Panc1 (cell line): ENCODE measurements at regions of chr3 and their contacts with region 1.

Region 1: DNA sequence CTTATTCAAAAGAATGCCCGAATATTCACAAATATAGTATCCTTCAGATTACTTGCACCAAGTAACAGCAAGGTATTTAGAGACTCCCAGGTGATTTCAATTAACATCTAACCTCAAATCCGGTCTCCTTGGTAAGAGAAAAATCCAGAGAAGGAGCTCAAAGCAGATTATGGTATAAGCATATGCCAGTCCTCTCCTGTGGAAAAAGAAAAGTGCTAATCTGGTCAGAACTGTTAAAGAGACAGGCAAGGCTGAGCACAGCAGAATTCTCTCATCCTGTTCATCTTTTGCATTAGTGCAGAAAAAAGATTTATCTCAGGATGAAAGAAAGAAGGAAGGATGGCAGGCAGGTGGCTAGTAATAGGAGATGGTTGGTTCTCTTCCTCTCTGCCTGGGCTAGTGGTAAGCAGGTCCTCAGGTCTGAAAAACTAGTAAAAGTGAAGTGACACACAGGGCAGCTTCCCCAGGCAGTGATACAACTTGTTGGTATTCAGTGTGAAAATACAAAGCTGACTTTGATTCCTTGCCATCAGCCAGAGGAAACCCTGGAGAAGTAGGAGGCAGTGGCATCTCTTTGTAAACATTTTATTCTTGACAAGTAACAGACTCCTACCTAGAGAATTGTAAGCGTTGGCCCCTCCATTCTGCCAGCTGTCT is 14.2 kb downstream of the ATXN7 start:
- DNase-seq: no peak
- ATAC-seq: no peak
- H3K4me3 ChIP-seq: no peak overlapping the region
- H3K27ac ChIP-seq: no peak overlapping the region
- H3K4me1 ChIP-seq: no peaks in the 10 kb centered on the region; the same call in 1 of the 2 replicates
- H3K27me3 ChIP-seq: no peaks in the 10 kb centered on the region
- CTCF ChIP-seq: no peak

Region 2: GRCh38 chr3:63809607-63810006 is 68.3 kb before region 1 on chr3:
- CTCF ChIA-PET with region 1: no interaction called
- POLR2A ChIA-PET with region 1: no interaction called
- in situ Hi-C with region 1: no loop called
- intact Hi-C with region 1: no loop called
- DNase-seq: no peak
- ATAC-seq: no peak
- H3K4me3 ChIP-seq: no peak overlapping the region
- H3K27ac ChIP-seq: no peak overlapping the region
- H3K4me1 ChIP-seq: no peaks in the 10 kb centered on the region
- H3K27me3 ChIP-seq: no peaks in the 10 kb centered on the region
- CTCF ChIP-seq: no peak

Region 3: DNA sequence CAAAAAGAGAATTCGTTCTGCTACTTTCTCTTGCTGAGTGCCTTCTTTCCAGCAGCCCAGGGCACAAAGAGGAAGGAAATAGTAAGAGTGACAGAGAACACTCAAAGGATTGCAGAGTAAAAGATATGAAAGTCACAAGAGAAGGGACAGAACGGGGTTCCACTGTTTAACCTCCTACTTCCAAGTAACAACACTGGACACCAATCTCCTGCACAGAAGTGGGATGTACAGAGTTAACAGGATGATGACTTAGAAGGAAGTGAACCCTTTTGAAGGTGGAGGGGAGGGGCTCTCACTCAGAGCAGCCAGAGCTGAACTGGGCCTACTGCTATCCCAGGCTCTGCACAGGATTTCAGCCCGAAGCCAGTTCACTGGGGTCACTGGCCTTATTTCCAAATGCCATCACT is 477.5 kb after region 1 on chr3:
- CTCF ChIA-PET with region 1: no interaction called
- POLR2A ChIA-PET with region 1: interaction called, 10 read pairs
- in situ Hi-C with region 1: no loop called
- intact Hi-C with region 1: no loop called
- DNase-seq: no peak
- ATAC-seq: no peak
- H3K4me3 ChIP-seq: no peak overlapping the region
- H3K27ac ChIP-seq: no peak overlapping the region
- H3K4me1 ChIP-seq: no peaks in the 10 kb centered on the region
- H3K27me3 ChIP-seq: no peaks in the 10 kb centered on the region
- CTCF ChIP-seq: no peak